PC-9 (cell line): ENCODE measurements at regions of chr4 and their contacts with region 1.

Region 1: DNA sequence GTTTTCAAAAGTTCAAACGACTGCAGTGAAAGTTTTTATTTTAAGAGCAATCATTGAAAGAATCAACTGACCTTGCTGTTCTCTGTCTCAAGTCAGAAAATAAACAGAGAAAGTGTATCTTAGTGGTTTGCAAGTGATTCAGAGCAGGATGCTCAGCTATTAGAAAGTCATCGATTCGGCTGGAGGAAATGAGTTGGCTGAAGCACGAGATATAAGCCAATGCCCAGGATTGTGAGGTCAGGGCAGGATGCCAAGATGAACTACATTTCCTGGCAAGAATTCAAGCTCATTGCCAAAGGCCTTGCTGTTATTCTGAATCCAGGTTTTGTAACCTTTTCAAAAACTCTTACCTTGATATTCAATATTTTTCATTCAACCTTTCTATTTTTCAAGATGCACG is 541.4 kb upstream of the BOD1L1 start:
- DNase-seq: peak; percentile 77 to 93
- H3K4me3 ChIP-seq: peak overlapping the region; percentile 41; the same call in 1 of the 2 replicates
- H3K27ac ChIP-seq: peak overlapping the region; percentile 99
- H3K4me1 ChIP-seq: peaks cover 37% of the 10 kb centered on the region
- H3K27me3 ChIP-seq: no peaks in the 10 kb centered on the region
- CTCF ChIP-seq: no peak

Region 2: GRCh38 chr4:13920901-13921300 is 248.0 kb before region 1 on chr4:
- CTCF ChIA-PET with region 1: no interaction called
- POLR2A ChIA-PET with region 1: interaction called, 23 read pairs
- intact Hi-C with region 1: loop called (anchors 1 kb)
- DNase-seq: peak; percentile 78 to 97
- H3K4me3 ChIP-seq: no peak overlapping the region
- H3K27ac ChIP-seq: peak overlapping the region; percentile 99
- H3K4me1 ChIP-seq: peaks cover 37% of the 10 kb centered on the region
- H3K27me3 ChIP-seq: no peaks in the 10 kb centered on the region
- CTCF ChIP-seq: no peak

Region 3: DNA sequence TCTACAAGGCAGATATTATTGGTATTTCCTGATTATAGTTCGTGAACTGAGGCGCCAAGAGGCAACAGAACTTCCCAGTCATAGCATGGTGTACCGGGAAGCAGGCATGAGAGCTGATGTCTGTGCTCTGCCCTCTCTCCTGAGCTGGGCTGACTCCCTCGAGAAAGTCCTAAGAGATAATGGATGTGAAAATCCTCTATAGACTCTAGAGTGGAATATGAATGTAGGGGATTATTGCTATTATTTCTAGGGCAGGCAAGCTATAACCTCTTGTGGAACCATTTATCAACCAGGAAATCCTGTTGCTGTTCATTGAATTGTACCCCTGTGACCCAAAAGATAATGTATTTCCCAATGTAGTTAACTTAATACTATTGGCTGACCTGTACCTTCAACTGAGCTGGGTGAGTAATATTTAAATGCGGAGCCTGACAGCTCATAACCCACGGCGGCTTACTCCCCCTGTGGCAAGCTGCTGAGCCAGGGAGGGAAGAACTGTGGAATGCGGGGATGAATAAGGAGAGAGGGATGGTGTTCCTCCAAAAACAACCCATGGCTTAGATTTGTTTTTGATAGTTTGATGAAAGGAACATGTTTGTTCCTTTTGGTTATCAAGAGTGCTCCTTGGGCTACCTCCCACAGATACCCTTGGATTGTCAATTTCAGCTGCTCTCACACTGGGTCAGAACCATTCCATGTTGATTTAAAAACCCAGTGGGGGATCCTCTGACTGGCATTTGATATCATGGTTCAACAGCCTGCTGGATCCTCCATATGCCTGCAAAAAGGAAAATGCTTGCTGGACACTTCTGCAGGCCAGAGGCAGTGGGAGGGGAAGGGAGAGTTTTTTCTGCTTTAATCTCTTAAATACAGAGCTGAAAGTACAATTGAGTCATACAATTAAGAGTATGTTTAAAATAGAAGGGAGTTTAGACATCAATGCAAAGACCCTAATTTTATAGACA is 202.4 kb before region 1 on chr4:
- CTCF ChIA-PET with region 1: interaction called, 12 read pairs
- POLR2A ChIA-PET with region 1: no interaction called
- intact Hi-C with region 1: no loop called
- DNase-seq: no peak
- H3K4me3 ChIP-seq: no peak overlapping the region
- H3K27ac ChIP-seq: no peak overlapping the region
- H3K4me1 ChIP-seq: no peaks in the 10 kb centered on the region
- H3K27me3 ChIP-seq: no peaks in the 10 kb centered on the region
- CTCF ChIP-seq: no peak

Region 4: DNA sequence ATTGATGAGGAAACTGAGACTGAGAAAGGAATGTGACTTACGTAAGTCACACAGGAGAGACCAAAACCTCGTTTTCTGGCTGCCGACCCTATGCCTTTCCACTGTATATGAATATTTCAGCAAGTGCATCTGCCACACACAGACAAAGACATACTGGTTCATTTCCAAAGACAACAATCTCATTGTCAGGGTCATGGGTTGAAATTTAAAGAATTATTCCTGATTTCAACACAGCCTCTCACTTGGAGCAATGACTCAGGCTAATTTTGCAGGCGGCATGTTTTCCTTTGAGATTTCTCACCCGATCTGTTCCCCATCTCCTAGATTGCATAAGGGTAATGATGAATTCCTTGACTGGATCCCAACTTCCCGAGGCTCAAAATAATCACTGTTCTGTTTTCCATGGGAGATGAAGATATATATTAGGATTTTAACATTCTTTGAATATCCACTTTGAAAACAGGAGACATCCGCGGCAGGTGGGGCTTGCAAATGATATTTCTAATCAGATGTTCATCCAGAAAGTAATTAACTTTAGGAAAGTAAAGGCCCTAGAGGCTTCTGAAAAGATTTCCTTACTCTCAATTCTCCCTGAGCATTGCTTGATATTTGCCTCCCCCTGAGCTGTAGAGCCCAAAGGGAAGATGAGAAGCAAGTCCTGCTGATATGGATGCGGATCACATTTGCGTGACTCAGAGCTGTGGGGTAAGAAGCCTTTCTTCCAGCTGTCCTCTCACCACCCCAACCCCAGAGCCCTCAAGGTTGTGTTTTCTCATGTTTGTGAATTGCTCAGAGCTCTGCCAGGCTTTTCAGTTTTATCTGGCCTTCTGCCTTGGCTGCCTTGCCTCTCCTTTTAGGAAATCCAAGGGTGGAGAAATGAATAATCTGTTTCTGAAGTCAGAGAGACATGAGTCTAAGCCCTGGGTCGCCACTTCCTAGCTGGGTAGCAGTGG is 180.3 kb before region 1 on chr4:
- CTCF ChIA-PET with region 1: no interaction called
- POLR2A ChIA-PET with region 1: no interaction called
- intact Hi-C with region 1: loop called (anchors 2 kb)
- DNase-seq: peak; percentile 31 to 84
- H3K4me3 ChIP-seq: peak overlapping the region; percentile 10; the same call in 1 of the 2 replicates
- H3K27ac ChIP-seq: peak overlapping the region; percentile 93
- H3K4me1 ChIP-seq: peaks cover 39% of the 10 kb centered on the region
- H3K27me3 ChIP-seq: no peaks in the 10 kb centered on the region
- CTCF ChIP-seq: no peak

Region 5: DNA sequence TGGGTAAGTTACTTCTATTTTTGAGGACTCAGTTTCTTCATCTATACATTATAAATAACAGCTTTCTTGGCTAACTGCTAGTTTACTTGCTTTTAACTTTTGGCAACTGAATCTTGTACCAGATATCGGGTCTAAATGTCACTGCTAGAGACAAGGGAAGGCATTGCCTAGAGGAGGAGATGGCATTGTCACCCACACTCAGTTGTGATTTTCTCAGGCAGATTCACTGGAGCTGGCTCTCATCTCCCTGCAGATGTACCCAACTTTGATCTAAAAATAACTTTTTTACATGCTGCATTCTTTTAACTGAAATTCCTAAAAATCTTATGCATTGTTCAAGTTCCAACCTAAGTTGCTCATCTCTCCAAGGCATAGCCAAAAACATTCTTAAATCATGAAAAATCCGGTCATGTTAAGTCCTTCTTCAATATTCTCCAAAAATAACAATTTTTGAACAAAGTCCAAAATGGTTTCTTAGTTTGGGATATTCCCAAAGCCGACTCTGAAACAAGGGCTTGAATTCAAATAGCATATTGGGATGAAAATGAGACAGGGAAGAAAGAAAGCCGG is 72.4 kb before region 1 on chr4:
- CTCF ChIA-PET with region 1: no interaction called
- POLR2A ChIA-PET with region 1: no interaction called
- intact Hi-C with region 1: no loop called
- DNase-seq: no peak
- H3K4me3 ChIP-seq: no peak overlapping the region
- H3K27ac ChIP-seq: no peak overlapping the region
- H3K4me1 ChIP-seq: no peaks in the 10 kb centered on the region
- H3K27me3 ChIP-seq: no peaks in the 10 kb centered on the region
- CTCF ChIP-seq: no peak

Region 6: GRCh38 chr4:14726441-14727405 is 557.8 kb after region 1 on chr4:
- CTCF ChIA-PET with region 1: no interaction called
- POLR2A ChIA-PET with region 1: no interaction called
- intact Hi-C with region 1: loop called (anchors 2 kb)
- DNase-seq: peak; percentile 70 to 89
- H3K4me3 ChIP-seq: peak overlapping the region; percentile 4; the same call in 1 of the 2 replicates
- H3K27ac ChIP-seq: peak overlapping the region; percentile 61
- H3K4me1 ChIP-seq: peaks cover 18% of the 10 kb centered on the region
- H3K27me3 ChIP-seq: no peaks in the 10 kb centered on the region
- CTCF ChIP-seq: no peak